PC-9 (cell line): ENCODE measurements at regions of chr1 and their contacts with region 1.

Region 1: DNA sequence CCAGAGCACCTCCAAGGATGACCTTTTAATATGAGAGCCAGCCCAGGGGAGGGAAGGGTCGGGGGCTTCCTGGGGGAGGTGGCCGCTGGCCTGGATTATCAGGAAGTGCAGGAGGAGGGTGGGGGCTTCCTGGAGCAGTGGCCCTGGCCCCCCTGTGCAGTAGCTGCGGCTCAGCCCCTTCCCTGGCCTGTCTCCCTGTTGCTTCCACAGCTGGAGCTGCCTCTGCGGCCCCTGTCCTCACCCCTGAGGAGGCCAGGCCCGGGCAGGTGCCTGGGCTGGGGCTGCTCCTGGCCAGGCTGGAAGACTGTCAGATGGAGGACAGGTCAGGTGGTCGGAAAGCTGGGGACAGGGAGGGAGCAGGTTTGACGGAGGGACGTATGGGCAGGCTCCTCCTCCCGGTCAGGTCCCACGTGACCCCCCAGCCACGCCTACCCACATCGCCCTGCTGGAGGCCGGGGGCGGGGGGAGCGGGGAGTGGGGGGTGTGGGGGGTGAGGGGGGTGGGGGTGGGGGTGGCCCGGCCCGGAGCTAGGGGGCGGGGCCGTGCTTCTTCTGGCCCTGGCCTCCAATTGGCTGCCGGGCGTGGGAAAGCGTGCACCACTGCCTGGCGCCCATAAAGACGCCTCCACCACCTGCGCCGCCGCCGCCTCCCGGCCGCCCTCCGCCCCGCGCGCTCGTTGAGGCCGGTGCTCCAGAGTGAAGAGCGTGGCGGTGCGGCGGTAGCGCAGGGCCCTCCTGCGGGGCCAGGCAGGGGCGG is 10.2 kb upstream of the TNFRSF14 start:
- DNase-seq: peak; percentile 74 to 90
- H3K4me3 ChIP-seq: peak overlapping the region; percentile 87
- H3K27ac ChIP-seq: peak overlapping the region; percentile 45
- H3K4me1 ChIP-seq: peaks cover 41% of the 10 kb centered on the region
- H3K27me3 ChIP-seq: no peaks in the 10 kb centered on the region
- CTCF ChIP-seq: no peak

Region 2: GRCh38 chr1:2194898-2195673 is 350.9 kb before region 1 on chr1:
- CTCF ChIA-PET with region 1: interaction called, 7 read pairs
- POLR2A ChIA-PET with region 1: interaction called, 16 read pairs
- intact Hi-C with region 1: loop called (anchors 1 kb)
- DNase-seq: peak; percentile 63 to 90
- H3K4me3 ChIP-seq: peak overlapping the region; percentile 60
- H3K27ac ChIP-seq: no peak overlapping the region
- H3K4me1 ChIP-seq: peaks cover 4% of the 10 kb centered on the region
- H3K27me3 ChIP-seq: no peaks in the 10 kb centered on the region
- CTCF ChIP-seq: peak; percentile 93

Region 3: DNA sequence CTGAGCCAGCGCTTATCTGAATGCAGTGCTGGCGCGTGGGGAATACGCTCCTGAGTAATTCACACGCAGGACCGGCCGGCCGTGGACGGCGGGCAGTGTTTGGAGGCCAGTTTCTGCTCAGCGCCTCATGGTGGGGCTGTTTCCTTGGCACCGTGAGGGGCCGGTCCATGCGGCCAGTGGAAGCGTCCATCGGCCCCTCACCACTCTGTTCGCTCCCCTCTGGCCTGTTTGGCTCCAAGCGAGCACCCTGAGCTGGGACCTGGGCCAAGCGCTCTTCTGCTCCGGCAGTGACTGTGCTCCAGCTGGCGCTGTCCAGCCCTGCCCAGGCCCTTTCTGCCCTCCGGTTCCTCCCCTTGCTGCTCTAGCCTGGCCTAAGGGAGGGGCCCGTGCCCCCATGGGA is 86.2 kb before region 1 on chr1:
- CTCF ChIA-PET with region 1: no interaction called
- POLR2A ChIA-PET with region 1: no interaction called
- intact Hi-C with region 1: loop called (anchors 2 kb)
- DNase-seq: peak; percentile 55
- H3K4me3 ChIP-seq: no peak overlapping the region
- H3K27ac ChIP-seq: no peak overlapping the region
- H3K4me1 ChIP-seq: peaks cover 8% of the 10 kb centered on the region; the same call in 1 of the 2 replicates
- H3K27me3 ChIP-seq: peaks cover 25% of the 10 kb centered on the region
- CTCF ChIP-seq: no peak

Region 4: GRCh38 chr1:2566101-2567045 is 20.4 kb after region 1 on chr1:
- CTCF ChIA-PET with region 1: no interaction called
- POLR2A ChIA-PET with region 1: interaction called, 10 read pairs
- intact Hi-C with region 1: no loop called
- DNase-seq: peak; percentile 30 to 56
- H3K4me3 ChIP-seq: no peak overlapping the region
- H3K27ac ChIP-seq: no peak overlapping the region
- H3K4me1 ChIP-seq: no peaks in the 10 kb centered on the region
- H3K27me3 ChIP-seq: peaks cover 43% of the 10 kb centered on the region
- CTCF ChIP-seq: no peak

Region 5: DNA sequence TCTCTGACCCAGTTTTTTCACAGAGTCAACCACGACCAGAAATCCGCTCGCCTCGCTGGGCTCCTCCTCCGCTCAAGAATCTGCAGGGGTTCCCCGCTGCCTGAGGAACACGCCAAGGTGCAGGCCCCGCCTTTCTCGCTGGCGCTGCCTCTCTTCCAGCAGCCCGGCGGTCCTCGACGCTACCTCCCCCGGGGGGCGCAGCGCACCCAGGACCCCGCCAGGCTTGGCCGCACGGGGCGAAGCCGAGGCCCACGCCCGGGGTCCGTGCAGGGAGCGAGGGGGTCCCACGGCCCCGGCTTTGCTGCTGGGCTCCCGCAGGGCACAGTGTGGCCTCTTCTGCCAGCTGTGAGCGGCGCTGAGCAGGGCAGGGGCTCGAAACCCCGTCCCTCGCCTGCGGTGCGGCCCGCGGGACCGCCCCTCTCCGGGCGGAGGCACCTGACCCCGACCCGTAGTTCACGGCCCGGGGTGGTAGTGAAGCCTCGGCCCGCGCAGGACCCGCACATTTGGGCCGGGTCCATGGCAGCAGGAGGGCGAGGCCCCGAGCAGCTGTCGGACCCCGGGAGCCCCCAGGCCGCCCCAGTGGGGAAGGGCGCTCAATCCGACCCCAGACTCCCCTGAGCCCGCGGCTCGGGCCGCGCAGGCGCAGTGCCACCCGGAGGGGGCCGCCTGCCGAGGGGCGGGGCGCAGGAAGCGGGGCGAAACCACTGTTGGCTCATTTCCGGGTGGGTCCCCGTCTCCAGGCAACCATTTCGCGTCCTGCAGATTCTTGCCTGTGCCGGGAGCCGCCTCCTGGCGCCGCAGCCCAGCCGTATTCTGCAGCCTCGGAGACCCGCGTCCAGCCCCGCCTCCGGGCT is 96.8 kb after region 1 on chr1:
- CTCF ChIA-PET with region 1: no interaction called
- POLR2A ChIA-PET with region 1: no interaction called
- intact Hi-C with region 1: loop called (anchors 10 kb)
- DNase-seq: peak; percentile 63 to 88
- H3K4me3 ChIP-seq: peak overlapping the region; percentile 91
- H3K27ac ChIP-seq: no peak overlapping the region
- H3K4me1 ChIP-seq: 0 out of 2 replicates have a peak, but pooled peaks cover 5% of the 10 kb centered on the region
- H3K27me3 ChIP-seq: peaks cover 16% of the 10 kb centered on the region
- CTCF ChIP-seq: no peak